ENCODE measurements at regions of chr7 and their contacts with region 1.

Region 1: DNA sequence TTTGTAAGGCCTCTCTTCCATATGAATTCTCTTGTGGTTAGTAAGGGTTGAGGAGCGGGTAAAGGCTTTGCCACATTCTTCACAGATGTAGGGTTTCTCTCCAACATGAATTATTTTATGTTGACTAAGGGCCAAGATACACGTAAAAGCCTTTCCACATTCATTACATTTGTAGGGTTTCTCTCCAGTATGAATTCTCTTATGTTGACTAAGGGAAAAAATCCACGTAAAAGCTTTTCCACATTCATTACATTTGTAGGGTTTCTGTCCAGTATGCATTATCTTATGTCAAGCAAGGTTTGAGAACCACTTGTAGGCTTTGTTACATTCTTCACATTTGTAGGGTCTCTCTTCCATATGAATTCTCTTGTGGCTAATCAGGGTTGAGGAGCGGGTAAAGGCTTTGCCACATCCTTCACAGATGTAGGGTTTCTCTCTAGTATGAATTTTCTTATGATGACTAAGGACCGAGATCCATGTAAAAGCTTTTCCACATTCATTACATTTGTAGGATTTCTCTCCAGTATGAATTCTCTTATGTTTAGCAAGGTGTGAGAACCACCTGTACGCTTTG is 493.0 kb downstream of the ZNF479 start:
- DNase-seq: no peak
- H3K4me3 Mint-ChIP-seq: no peak overlapping the region
- H3K27ac Mint-ChIP-seq: no peak overlapping the region
- H3K4me1 Mint-ChIP-seq: no peaks in the 10 kb centered on the region
- H3K27me3 Mint-ChIP-seq: no peaks in the 10 kb centered on the region
- CTCF ChIP-seq: no peak

Region 2: DNA sequence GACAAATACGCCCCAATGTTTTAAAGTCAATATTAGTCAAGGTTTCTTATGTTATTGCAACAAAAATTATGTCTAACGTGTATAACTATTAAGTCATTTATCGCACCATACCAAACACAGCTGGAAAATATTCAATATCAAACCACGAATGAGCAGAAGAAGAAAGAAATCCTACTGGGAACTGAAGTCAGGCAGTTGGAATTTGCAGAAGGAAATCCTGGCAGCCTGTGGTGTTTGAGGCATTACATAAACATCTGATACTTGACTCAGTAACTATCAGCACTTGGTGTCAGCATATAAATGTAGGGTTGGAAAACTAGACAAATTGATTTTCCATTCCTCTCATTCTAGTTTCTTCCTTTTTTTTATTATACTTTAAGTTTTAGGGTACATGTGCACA is 439.6 kb before region 1 on chr7:
- CTCF ChIA-PET with region 1: no interaction called
- intact Hi-C with region 1: no loop called
- DNase-seq: no peak
- H3K4me3 Mint-ChIP-seq: no peak overlapping the region
- H3K27ac Mint-ChIP-seq: no peak overlapping the region
- H3K4me1 Mint-ChIP-seq: no peaks in the 10 kb centered on the region
- H3K27me3 Mint-ChIP-seq: no peaks in the 10 kb centered on the region
- CTCF ChIP-seq: no peak

Region 3: DNA sequence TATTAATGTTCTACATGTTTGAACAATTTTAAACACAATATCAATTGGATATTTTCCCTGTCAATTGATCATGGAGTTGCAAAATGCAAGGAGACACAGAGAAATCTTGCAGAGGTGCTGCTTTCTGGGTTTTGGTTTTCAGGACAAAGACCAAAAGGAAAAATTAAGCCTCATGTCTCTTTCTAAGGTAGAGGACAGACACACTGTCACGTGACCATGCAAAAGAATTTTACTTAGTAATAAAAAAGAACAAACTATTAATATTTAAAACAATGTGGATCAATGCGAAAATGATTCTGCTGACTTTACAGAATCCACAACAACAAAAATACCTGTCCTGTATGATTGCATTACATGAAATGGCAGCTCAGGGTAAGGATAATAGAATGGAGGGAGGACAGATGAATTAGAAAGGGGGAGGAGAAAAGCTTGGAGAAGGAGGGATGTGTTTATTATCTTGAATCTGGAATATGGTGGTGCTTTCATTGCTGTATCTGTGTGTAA is 29.4 kb before region 1 on chr7:
- CTCF ChIA-PET with region 1: interaction called, 10 read pairs
- intact Hi-C with region 1: no loop called
- DNase-seq: no peak
- H3K4me3 Mint-ChIP-seq: no peak overlapping the region
- H3K27ac Mint-ChIP-seq: no peak overlapping the region
- H3K4me1 Mint-ChIP-seq: no peaks in the 10 kb centered on the region
- H3K27me3 Mint-ChIP-seq: no peaks in the 10 kb centered on the region
- CTCF ChIP-seq: no peak